ENCODE measurements at regions of chr11 and their contacts with region 1.

Region 1: GRCh38 chr11:47987781-47988180 is 7.4 kb downstream of the PTPRJ start:
- DNase-seq: no peak

Region 2: DNA sequence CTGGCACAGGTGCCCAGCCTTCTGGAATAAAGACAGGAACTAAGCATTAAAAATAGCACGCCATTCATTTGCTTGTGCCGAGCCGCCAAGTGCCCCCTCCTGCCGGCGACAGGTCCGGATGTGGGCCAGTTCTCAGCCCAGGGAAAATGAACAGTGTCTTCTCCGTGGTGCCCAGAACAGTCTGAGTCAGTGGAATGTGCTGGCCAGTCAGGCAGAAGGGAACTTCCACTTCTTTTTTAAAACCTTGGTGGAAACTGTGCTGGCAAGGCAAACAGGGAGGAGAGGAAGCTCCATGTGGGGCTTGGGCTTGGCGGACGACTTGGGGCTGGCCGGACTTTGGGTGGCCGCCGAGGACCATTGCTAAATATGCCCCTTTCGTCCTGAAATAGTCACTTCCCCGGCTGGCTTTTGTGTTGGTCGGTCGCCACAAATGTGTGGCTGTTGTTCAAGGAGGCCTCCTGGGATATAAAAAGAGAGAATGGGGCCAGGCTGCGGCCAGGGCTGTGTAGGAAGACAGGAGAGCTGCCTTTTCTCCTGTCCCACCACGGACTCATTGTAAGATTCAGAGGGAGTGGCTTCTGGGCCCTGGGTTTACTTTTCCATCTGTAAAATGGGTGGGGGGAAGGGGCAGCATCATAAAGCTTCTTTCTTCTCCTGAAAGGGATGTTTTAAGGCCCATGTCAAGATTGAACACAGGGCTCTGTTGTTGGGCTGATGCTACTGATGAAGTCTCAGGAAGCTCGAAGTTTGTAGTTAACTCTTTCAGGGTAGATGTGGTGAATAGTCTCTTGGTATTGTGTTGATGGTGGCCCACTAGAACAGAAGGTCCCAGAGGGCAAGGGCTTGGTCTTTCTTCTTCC is 93.6 kb after region 1 on chr11:
- intact Hi-C with region 1: loop called (anchors 5 kb)
- DNase-seq: peak; percentile 86

Measured in cardiac septum (tissue), 1 donor.